ENCODE measurements at regions of chr1 and their contacts with region 1.

Region 1: GRCh38 chr1:151070474-151071276 is at the start of gene GABPB2:
- DNase-seq: peak; percentile 80 to 97
- H3K4me3 ChIP-seq: peak within 1 kb of the TSS; percentile 58 to 88
- H3K27ac ChIP-seq: peak within 1 kb of the TSS; percentile 98 to 99
- H3K4me1 ChIP-seq: peaks cover 0 to 5% of the 10 kb centered on the region in 2 donors
- H3K27me3 ChIP-seq: no peaks in the 10 kb centered on the region
- CTCF ChIP-seq: peak; percentile 79 to 91 (median 85)
- total RNA-seq, gene GABPB2: 3.7 TPM

Region 2: GRCh38 chr1:150363426-150364230 is 707.0 kb before region 1 on chr1 and contains the start of gene RPRD2:
- intact Hi-C with region 1: loop called (anchors 5 kb)
- DNase-seq: peak; percentile 99 to 100
- H3K4me3 ChIP-seq: peak within 1 kb of the TSS; percentile 55 to 80
- H3K27ac ChIP-seq: peak within 1 kb of the TSS; percentile 93 to 94
- H3K4me1 ChIP-seq: peaks cover 0 to 2% of the 10 kb centered on the region in 2 donors
- H3K27me3 ChIP-seq: no peaks in the 10 kb centered on the region
- CTCF ChIP-seq: no peak
- total RNA-seq, gene RPRD2: 13.7 TPM

Region 3: DNA sequence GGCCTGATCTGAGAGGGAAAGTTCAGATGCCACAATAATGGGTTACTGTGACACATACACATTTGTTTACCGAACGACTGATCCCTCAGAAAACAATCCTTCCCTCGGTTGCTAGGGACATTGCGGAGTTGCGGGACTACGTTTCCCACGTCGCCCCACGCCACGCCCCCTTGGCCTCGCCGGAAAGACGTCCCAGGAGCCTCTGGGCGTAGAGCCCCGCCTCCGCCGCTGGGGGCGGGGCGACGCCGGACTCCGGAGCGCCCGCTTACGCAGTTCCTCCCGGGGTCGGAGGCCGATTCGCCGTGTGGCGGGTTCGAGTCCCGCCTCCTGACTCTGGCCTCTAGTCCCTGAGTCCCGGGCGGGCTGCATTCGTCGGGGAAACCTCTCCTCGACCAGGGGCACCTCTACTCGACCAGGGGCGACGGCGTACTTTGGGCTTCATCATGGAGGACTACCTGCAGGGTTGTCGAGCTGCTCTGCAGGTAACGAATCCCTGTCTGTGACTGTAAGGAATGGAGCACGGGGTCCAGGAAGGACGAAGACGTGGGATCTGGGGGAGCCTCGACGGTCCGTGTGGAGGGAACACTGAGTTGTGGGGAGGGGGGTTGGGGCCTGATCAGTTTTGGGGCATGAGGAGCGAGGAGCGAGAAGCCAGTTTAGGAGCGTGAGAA is 62.4 kb before region 1 on chr1 and contains the start of gene PRUNE1:
- intact Hi-C with region 1: loop called (anchors 1 kb)
- DNase-seq: peak; percentile 84 to 97
- H3K4me3 ChIP-seq: peak within 1 kb of the TSS; percentile 70 to 71
- H3K27ac ChIP-seq: peak within 1 kb of the TSS; percentile 85 to 87
- H3K4me1 ChIP-seq: peaks cover 11 to 48% of the 10 kb centered on the region in 2 donors
- H3K27me3 ChIP-seq: no peaks in the 10 kb centered on the region
- CTCF ChIP-seq: no peak
- total RNA-seq, gene PRUNE1: 36.5 TPM

Region 4: GRCh38 chr1:151024540-151025146 is 46.0 kb before region 1 on chr1:
- intact Hi-C with region 1: loop called (anchors 5 kb)
- DNase-seq: peak in 1 of 2 donors; percentile 92
- H3K4me3 ChIP-seq: no peak overlapping the region
- H3K27ac ChIP-seq: peak overlapping the region; percentile 27 to 28
- H3K4me1 ChIP-seq: no peaks in the 10 kb centered on the region
- H3K27me3 ChIP-seq: no peaks in the 10 kb centered on the region
- CTCF ChIP-seq: peak; percentile 64 to 83 (median 80)

Region 5: GRCh38 chr1:151036363-151036762 is 34.3 kb before region 1 on chr1 and contains the start of gene BNIPL:
- intact Hi-C with region 1: no loop called
- DNase-seq: no peak
- H3K4me3 ChIP-seq: no peak within 1 kb of the TSS
- H3K27ac ChIP-seq: no peak within 1 kb of the TSS
- H3K4me1 ChIP-seq: no peaks in the 10 kb centered on the region
- H3K27me3 ChIP-seq: no peaks in the 10 kb centered on the region
- CTCF ChIP-seq: no peak
- total RNA-seq, gene BNIPL: not detected

Region 6: DNA sequence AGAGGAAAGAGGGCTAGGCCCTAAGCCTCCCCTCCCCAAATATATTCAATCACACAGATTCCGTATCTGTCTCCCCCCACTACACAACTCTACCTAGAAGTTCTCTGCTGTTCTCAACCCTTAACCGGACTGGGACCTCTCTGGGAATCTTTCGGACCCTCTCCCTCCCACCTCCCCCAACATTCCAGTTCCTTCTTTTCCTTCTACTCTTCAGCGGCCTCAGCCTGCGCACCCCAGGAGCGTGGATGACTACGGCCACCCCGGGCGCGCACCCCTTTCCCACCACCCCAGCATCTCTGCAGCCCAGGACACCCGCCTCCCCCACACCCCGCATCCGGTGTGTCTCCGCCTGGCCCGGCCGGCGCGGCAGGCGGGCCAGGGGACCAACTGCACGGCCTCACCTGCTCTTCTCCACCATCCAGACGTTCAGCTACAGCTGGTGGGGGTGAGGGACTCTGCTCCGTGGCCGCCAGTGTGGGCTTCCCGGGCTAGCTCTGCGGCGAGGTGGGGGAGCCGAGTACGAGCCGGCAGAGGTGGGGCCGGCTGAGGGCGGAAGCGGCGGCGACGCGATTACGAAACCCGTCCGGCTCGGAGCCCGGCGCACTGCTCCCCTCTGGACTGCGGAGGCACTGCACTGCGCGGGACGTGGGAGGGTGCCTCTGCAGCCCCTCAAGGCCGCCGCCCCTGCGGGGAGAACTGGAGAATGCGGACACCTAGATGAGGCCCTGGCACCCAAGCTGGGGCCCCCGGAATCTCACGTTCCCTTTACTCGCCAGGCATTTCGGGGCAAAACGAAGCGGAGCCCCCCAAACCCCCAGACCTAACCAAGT is 11.4 kb before region 1 on chr1 and contains the start of gene CDC42SE1:
- intact Hi-C with region 1: loop called (anchors 1 kb)
- DNase-seq: peak in 1 of 2 donors; percentile 92
- H3K4me3 ChIP-seq: peak within 1 kb of the TSS; percentile 83 to 93
- H3K27ac ChIP-seq: peak within 1 kb of the TSS; percentile 96
- H3K4me1 ChIP-seq: peaks cover 0 to 37% of the 10 kb centered on the region in 2 donors
- H3K27me3 ChIP-seq: no peaks in the 10 kb centered on the region
- CTCF ChIP-seq: peak; percentile 75 to 96 (median 89)
- total RNA-seq, gene CDC42SE1: 42.4 TPM

Region 7: DNA sequence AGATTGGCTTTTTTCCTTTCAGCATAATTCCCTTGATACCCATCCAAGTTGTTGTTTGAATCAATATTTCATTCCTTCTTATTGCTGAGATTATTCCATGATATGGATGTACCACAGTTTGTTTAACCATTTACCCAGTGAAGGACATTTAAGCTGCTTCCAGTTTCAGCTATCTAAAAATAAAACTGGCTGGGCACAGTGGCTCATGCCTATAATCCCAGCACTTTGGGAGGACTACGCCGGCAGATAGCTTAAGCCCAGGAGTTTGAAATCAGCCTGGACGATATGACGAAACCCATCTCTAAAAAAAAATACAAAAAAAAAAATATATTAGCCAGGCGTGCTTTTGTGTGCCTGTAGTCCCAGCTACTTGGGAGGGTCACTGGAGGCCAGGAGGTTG is 43.2 kb after region 1 on chr1:
- intact Hi-C with region 1: no loop called
- DNase-seq: no peak
- H3K4me3 ChIP-seq: no peak overlapping the region
- H3K27ac ChIP-seq: no peak overlapping the region
- H3K4me1 ChIP-seq: no peaks in the 10 kb centered on the region
- H3K27me3 ChIP-seq: no peaks in the 10 kb centered on the region
- CTCF ChIP-seq: no peak

Region 8: DNA sequence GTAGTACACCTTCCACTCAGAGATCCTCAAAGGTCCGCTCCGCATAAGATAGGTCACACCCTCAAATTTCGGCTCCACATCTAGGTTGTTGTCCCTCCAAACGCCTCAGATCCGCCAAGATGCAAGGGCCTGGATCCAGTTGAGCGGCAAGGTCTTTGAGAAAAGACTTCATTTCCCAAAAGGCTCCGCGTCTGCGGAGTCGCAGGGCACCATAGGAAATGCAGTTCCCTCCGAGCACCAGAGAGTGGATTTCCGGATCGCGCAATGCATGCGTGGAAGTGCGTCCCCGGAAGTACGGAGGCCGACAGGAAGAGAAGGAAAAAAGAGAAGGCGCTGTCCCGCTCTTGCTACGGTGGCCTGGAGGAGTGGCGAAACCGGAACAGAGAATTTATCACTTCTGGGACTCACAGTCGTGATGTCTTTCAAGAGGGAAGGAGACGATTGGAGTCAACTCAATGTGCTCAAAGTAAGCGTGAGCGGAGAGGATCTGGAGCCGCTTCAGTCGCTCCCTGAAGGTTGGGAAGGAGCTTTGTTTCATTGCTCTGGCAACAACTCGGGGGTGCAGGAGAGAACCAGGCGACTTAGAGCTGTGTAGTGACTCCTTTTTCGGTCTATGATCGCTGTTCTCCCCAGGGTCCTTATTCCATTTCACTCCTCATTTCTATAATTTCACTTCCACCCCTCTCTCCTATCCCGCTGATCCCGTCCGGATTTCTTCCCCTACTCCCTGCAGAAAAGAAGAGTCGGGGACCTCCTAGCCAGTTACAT is 95.2 kb after region 1 on chr1 and contains the starts of genes LYSMD1 and SCNM1:
- intact Hi-C with region 1: loop called (anchors 2 kb)
- DNase-seq: peak; percentile 91 to 99
- H3K4me3 ChIP-seq: peak within 1 kb of the TSS; percentile 65 to 71
- H3K27ac ChIP-seq: peak within 1 kb of the TSS; percentile 77 to 86
- H3K4me1 ChIP-seq: peaks cover 10 to 23% of the 10 kb centered on the region in 2 donors
- H3K27me3 ChIP-seq: no peaks in the 10 kb centered on the region
- CTCF ChIP-seq: no peak
- total RNA-seq, gene LYSMD1: 0.85 TPM
- total RNA-seq, gene SCNM1: 27.4 TPM

Region 9: DNA sequence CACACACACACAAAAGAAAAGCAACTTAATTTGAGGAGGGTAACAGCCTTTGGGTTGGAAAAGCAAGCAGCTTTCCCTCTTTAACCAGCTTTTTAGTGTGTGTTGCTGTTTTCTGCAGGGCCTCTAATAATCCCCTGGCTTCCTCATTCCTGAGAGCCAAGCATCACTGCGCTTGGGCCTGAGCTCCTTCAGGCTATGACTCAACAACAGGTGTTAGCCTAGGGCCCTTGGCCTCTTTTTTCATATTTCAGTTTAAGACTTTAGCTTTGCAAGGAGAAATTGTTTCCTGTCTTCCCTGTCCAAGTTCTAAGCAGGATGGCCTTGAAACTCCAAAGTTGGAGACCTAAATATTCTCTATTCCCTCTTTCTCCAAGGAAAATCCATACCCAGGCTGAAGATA is 514.9 kb after region 1 on chr1:
- intact Hi-C with region 1: no loop called
- DNase-seq: peak in 1 of 2 donors; percentile 22
- H3K4me3 ChIP-seq: no peak overlapping the region
- H3K27ac ChIP-seq: no peak overlapping the region
- H3K4me1 ChIP-seq: no peaks in the 10 kb centered on the region
- H3K27me3 ChIP-seq: no peaks in the 10 kb centered on the region
- CTCF ChIP-seq: no peak